ENCODE measurements at regions of chr2 and their contacts with region 1.

Region 1: GRCh38 chr2:47272031-47272864 is 117.1 kb upstream of the STPG4 start:
- DNase-seq: peak; percentile 76 to 85
- ATAC-seq: peak; percentile 64 to 81 (median 75)
- H3K4me3 ChIP-seq: peak overlapping the region; percentile 49
- H3K27ac ChIP-seq: peak overlapping the region; percentile 95
- H3K4me1 ChIP-seq: peaks cover 34% of the 10 kb centered on the region
- H3K27me3 ChIP-seq: no peaks in the 10 kb centered on the region
- CTCF ChIP-seq: peak; percentile 100

Region 2: GRCh38 chr2:47016172-47016913 is 255.9 kb before region 1 on chr2:
- intact Hi-C with region 1: loop called in 1 of 2 experiments (anchors 2 kb)
- DNase-seq: peak; percentile 53 to 86
- ATAC-seq: peak; percentile 86 to 92 (median 92)
- H3K4me3 ChIP-seq: no peak overlapping the region
- H3K27ac ChIP-seq: peak overlapping the region; percentile 93
- H3K4me1 ChIP-seq: peaks cover 39% of the 10 kb centered on the region
- H3K27me3 ChIP-seq: no peaks in the 10 kb centered on the region
- CTCF ChIP-seq: no peak

Measured in psoas muscle (tissue), 8 donors.